ENCODE measurements at regions of chr3 and their contacts with region 1.

Region 1: DNA sequence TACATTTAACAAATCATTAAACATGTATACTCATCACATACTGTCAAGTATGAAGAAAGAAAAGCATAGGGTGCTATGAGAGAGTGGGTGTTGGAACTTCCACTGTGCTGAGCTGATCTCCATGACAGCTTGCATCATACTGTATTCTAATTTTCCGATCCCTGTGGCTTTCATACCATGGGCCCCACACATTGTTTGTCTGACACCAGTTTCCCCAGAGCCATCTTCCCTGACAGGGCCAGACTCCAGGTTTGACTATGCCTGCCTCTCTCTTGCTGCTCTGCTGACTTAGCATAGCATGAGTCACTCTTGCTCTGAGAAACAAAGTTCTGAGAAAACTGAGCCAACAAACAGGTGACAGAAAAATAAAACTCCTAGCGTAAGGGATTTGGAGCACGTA is 37.0 kb upstream of the CASR start:
- DNase-seq: peak; percentile 90
- H3K4me3 Mint-ChIP-seq: no peak overlapping the region
- H3K27ac Mint-ChIP-seq: peak overlapping the region; percentile 87
- H3K4me1 Mint-ChIP-seq: peaks cover 34% of the 10 kb centered on the region
- H3K27me3 Mint-ChIP-seq: peaks cover 3% of the 10 kb centered on the region

Region 2: DNA sequence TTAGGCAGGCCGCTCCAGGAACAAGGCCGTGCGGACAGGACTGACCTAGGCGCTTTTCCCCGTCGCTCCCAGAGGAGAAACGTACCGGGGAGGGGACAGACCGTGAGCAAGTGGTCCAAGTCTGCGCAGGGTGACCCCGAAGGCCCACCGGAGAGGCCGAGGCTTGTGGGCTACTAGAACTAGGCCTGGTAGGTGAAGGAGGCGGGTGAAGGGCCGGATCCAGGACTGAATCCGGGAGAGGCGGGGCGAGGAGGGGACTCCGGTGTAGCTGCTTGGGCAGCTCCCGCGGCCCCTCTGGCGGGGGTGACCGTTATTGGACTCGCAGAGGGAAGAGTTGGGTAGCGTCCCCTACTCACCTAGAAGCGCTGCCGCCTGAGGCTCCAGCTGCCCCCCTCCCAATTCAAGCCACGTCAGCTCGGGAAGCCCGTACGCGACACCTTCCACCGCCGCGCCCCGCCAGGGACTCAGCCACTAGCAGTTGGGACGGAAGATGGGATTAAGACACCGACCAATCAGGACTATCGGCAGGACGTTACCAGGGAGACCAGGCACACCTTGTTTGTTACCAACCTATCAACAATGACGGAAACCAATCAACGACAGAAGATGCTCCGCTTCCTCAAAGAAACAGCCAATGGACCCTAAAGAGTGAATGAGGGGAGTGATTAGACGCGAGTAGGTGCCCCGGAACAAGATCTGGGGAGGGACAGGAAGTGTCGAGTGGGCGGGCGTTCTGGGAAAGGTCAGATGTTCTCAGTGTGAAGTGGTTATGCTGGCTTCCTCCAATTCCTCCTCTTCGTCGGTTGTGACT is 397.0 kb before region 1 on chr3 and contains the start of gene GOLGB1:
- CTCF ChIA-PET with region 1: no interaction called
- POLR2A ChIA-PET with region 1: no interaction called
- intact Hi-C with region 1: loop called (anchors 5 kb)
- DNase-seq: peak; percentile 97
- H3K4me3 Mint-ChIP-seq: no peak within 1 kb of the TSS
- H3K27ac Mint-ChIP-seq: no peak within 1 kb of the TSS
- H3K4me1 Mint-ChIP-seq: peaks cover 10% of the 10 kb centered on the region
- H3K27me3 Mint-ChIP-seq: no peaks in the 10 kb centered on the region
- total RNA-seq, gene GOLGB1: 22.7 to 26.0 TPM

Region 3: GRCh38 chr3:122092460-122093165 is 53.9 kb before region 1 on chr3:
- CTCF ChIA-PET with region 1: no interaction called
- POLR2A ChIA-PET with region 1: interaction called, 5 read pairs
- intact Hi-C with region 1: loop called (anchors 1 kb)
- DNase-seq: peak; percentile 86
- H3K4me3 Mint-ChIP-seq: no peak overlapping the region
- H3K27ac Mint-ChIP-seq: peak overlapping the region; percentile 59
- H3K4me1 Mint-ChIP-seq: peaks cover 34% of the 10 kb centered on the region
- H3K27me3 Mint-ChIP-seq: no peaks in the 10 kb centered on the region

Region 4: DNA sequence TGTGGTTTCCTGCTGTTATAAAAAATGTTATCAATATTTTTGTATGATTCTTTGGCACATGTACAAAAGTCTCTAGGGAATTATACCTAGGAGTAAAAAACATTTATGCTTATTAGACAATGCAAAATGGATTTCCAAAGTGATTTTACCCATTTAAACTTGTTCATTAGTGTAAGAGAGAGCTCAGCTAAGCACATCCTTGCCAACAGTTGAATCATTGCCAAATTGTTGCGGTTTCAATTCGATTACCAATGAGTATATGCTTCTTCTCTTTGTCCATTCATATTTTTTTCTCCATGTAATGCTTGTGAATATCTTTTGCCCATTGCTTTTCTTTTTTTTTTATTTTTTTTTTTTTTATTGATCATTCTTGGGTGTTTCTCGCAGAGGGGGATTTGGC is 54.2 kb after region 1 on chr3:
- CTCF ChIA-PET with region 1: no interaction called
- POLR2A ChIA-PET with region 1: no interaction called
- intact Hi-C with region 1: no loop called
- DNase-seq: no peak
- H3K4me3 Mint-ChIP-seq: no peak overlapping the region
- H3K27ac Mint-ChIP-seq: no peak overlapping the region
- H3K4me1 Mint-ChIP-seq: peaks cover 3% of the 10 kb centered on the region
- H3K27me3 Mint-ChIP-seq: peaks cover 2% of the 10 kb centered on the region

Region 5: DNA sequence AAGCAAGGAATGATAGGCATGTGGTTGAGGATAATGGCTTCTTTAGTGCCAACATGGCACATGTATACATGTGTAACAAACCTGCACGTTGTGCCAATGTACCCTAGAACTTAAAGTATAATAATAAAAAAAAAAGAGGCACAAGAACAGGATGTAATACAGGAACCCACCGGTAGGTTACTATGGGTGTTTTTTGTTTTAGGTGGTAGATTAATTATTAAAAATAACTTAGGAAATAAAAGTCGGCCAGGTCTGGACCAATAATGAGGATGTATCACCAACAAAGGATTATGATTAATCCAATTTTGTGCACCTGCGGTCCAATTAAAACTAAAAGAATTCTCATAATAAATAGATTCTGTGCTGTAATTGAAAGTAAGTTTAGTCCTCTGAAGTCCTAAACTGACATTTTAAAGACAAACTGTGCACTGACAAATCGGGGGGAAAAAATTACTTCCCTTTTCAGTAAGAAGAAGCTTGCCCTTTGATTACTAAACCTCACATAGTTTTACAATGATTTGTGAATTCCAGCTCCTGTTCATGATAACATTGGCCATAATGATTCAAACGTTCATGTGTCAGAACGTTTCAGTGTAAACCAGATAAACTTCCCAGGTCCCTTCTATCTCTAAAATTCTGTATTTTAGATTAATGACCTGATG is 99.2 kb after region 1 on chr3:
- CTCF ChIA-PET with region 1: interaction called, 3 read pairs
- POLR2A ChIA-PET with region 1: interaction called, 3 read pairs
- intact Hi-C with region 1: loop called (anchors 2 kb)
- DNase-seq: no peak
- H3K4me3 Mint-ChIP-seq: peak overlapping the region; percentile 48
- H3K27ac Mint-ChIP-seq: peak overlapping the region; percentile 43
- H3K4me1 Mint-ChIP-seq: peaks cover 16% of the 10 kb centered on the region
- H3K27me3 Mint-ChIP-seq: peaks cover 12% of the 10 kb centered on the region

Region 6: GRCh38 chr3:122365073-122365472 is 218.6 kb after region 1 on chr3:
- CTCF ChIA-PET with region 1: no interaction called
- POLR2A ChIA-PET with region 1: no interaction called
- intact Hi-C with region 1: loop called (anchors 1 kb)
- DNase-seq: no peak
- H3K4me3 Mint-ChIP-seq: no peak overlapping the region
- H3K27ac Mint-ChIP-seq: peak overlapping the region; percentile 94
- H3K4me1 Mint-ChIP-seq: peaks cover 26% of the 10 kb centered on the region
- H3K27me3 Mint-ChIP-seq: no peaks in the 10 kb centered on the region

Region 7: GRCh38 chr3:122389892-122390291 is 243.4 kb after region 1 on chr3:
- CTCF ChIA-PET with region 1: no interaction called
- POLR2A ChIA-PET with region 1: no interaction called
- intact Hi-C with region 1: no loop called
- DNase-seq: no peak
- H3K4me3 Mint-ChIP-seq: no peak overlapping the region
- H3K27ac Mint-ChIP-seq: no peak overlapping the region
- H3K4me1 Mint-ChIP-seq: peaks cover 35% of the 10 kb centered on the region
- H3K27me3 Mint-ChIP-seq: no peaks in the 10 kb centered on the region

Region 8: DNA sequence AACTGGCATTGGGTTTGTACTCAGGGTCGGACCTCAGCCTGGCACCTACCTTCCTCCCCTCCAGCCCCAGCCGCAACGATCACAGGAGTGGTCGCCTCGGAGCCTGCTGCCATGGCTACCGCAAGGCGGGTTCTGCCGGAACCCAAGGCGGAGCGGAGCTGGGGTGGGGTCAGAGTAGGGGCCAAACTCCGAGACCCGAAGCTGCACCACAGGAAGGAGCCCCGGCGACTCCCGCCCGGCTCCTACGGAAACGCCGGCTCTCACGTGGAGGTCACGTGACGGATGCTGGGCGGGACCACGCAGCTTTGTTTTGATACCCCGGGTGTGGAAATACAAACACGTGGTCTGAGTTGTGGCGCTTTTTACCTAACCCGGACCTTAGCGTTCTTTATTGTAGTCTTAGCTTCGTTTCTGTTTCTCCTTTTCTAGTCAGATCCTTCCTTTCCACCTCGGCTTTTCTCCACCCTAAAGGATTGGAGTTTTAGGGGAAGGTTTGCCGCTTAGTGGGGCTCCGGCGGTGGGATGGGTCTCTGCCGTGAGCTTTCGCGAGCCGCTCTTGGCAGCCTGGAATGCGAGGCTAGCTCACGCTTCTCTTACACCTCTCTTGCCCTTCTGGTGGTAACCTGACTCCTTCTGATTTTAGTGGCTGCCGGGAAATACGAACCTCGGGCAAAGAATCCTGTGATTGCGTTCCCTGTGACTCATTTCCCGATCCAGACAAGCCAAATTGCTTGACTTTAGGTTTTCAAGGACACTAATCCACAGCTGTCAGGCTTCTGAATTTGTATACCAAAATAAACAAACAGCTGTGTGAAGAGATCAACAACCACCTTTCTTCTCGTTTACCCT is 647.3 kb after region 1 on chr3 and contains the start of gene HSPBAP1:
- CTCF ChIA-PET with region 1: no interaction called
- POLR2A ChIA-PET with region 1: no interaction called
- intact Hi-C with region 1: loop called (anchors 10 kb)
- DNase-seq: peak; percentile 93
- H3K4me3 Mint-ChIP-seq: peak within 1 kb of the TSS; percentile 85
- H3K27ac Mint-ChIP-seq: peak within 1 kb of the TSS; percentile 82
- H3K4me1 Mint-ChIP-seq: peaks cover 29% of the 10 kb centered on the region
- H3K27me3 Mint-ChIP-seq: no peaks in the 10 kb centered on the region
- total RNA-seq, gene HSPBAP1: 4.8 TPM

Measured in activated CD4-positive, alpha-beta memory T cell treated with anti-CD3 and anti-CD28 coated beads for 36 hours (primary cell).